Heart left ventricle (tissue), 16 donors: ENCODE measurements at regions of chr13 and their contacts with region 1.

Region 1: DNA sequence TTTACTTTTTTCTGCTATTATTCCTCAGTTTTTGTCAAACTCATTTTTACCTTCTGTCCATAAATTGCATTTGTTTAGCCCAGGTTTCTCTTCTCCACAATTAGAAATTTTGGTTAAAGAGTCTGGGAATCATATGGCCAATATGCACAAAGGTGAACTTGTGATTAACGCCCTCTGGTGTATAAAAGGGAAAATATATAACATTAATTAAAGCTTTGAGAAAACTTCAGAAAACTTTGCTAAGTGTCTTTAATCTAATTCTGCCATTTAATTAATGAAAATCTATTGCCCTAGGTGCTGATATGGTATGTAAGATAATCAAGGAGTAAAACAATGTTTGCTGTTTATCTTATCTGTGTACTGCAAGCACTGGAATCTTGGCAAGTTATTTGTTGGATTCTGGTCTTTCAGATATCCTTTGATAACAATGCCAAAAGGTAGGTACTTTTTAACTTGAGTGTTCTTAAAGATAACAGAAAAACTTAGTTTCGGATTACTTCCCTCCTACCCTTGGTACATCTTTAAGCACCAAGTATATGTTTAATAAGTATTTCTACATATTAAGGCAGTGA is 402.6 kb downstream of the SUCLA2 start:
- DNase-seq: no peak
- ATAC-seq: no peak
- H3K4me3 ChIP-seq: no peak overlapping the region
- H3K27ac ChIP-seq: no peak overlapping the region
- H3K4me1 ChIP-seq: no peaks in the 10 kb centered on the region
- H3K27me3 ChIP-seq: no peaks in the 10 kb centered on the region
- CTCF ChIP-seq: peak in 9 of 12 donors; percentile 7 to 53 (median 33)
- POLR2A ChIP-seq: no peak

Region 2: GRCh38 chr13:46831588-46832194 is 766.7 kb before region 1 on chr13:
- intact Hi-C with region 1: loop called in 1 of 10 experiments (anchors 10 kb)
- DNase-seq: no peak
- ATAC-seq: peak in 1 of 4 donors; percentile 36
- H3K4me3 ChIP-seq: no peak overlapping the region
- H3K27ac ChIP-seq: no peak overlapping the region
- H3K4me1 ChIP-seq: no peaks in the 10 kb centered on the region
- H3K27me3 ChIP-seq: no peaks in the 10 kb centered on the region
- CTCF ChIP-seq: peak; percentile 55 to 86 (median 74)
- POLR2A ChIP-seq: no peak

Region 3: GRCh38 chr13:46975173-46975572 is 623.3 kb before region 1 on chr13:
- intact Hi-C with region 1: loop called in 1 of 10 experiments (anchors 10 kb)
- DNase-seq: no peak
- ATAC-seq: no peak
- H3K4me3 ChIP-seq: no peak overlapping the region
- H3K27ac ChIP-seq: no peak overlapping the region
- H3K4me1 ChIP-seq: no peaks in the 10 kb centered on the region
- H3K27me3 ChIP-seq: no peaks in the 10 kb centered on the region
- CTCF ChIP-seq: no peak
- POLR2A ChIP-seq: no peak

Region 4: DNA sequence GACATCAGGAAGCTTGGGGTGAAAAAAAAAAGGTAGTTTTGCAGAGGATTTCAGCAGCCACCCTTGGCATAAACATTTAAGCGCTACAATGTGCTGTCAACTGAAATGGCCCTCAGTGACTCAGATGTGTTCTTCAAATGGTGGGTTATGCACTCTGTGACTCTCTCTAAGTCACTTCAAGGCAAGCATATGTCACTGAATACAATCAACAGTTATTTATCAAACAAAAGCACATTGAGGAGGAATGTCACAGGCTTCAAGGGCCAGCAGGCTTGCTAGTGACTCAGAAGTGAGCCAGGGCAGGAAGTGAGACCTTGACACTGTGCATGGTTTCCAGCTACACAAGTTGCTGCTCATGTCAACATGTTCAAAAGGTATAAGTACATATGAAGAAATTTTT is 177.9 kb before region 1 on chr13:
- intact Hi-C with region 1: loop called in 9 of 10 experiments (anchors 2 to 10 kb)
- DNase-seq: no peak
- ATAC-seq: peak in 3 of 4 donors; percentile 28 to 50 (median 34)
- H3K4me3 ChIP-seq: no peak overlapping the region
- H3K27ac ChIP-seq: no peak overlapping the region
- H3K4me1 ChIP-seq: peaks cover 0 to 8% (median 0%) of the 10 kb centered on the region in 12 donors
- H3K27me3 ChIP-seq: no peaks in the 10 kb centered on the region
- CTCF ChIP-seq: no peak
- POLR2A ChIP-seq: no peak

Region 5: GRCh38 chr13:47426126-47426849 is 172.1 kb before region 1 on chr13:
- intact Hi-C with region 1: loop called in 9 of 10 experiments (anchors 2 to 10 kb)
- DNase-seq: peak; percentile 28 to 52 (median 46)
- ATAC-seq: peak; percentile 82 to 90 (median 88)
- H3K4me3 ChIP-seq: no peak overlapping the region
- H3K27ac ChIP-seq: no peak overlapping the region
- H3K4me1 ChIP-seq: peaks cover 0 to 7% (median 0%) of the 10 kb centered on the region in 12 donors
- H3K27me3 ChIP-seq: no peaks in the 10 kb centered on the region
- CTCF ChIP-seq: no peak
- POLR2A ChIP-seq: no peak

Region 6: GRCh38 chr13:47723898-47724297 is 125.5 kb after region 1 on chr13:
- intact Hi-C with region 1: no loop called
- DNase-seq: no peak
- ATAC-seq: no peak
- H3K4me3 ChIP-seq: no peak overlapping the region
- H3K27ac ChIP-seq: no peak overlapping the region
- H3K4me1 ChIP-seq: no peaks in the 10 kb centered on the region
- H3K27me3 ChIP-seq: peaks cover 0 to 4% (median 0%) of the 10 kb centered on the region in 9 donors
- CTCF ChIP-seq: no peak
- POLR2A ChIP-seq: no peak